Activated CD8-positive, alpha-beta T cell treated with anti-CD3 and anti-CD28 coated beads for 36 hours (primary cell): ENCODE measurements at regions of chr19 and their contacts with region 1.

Region 1: DNA sequence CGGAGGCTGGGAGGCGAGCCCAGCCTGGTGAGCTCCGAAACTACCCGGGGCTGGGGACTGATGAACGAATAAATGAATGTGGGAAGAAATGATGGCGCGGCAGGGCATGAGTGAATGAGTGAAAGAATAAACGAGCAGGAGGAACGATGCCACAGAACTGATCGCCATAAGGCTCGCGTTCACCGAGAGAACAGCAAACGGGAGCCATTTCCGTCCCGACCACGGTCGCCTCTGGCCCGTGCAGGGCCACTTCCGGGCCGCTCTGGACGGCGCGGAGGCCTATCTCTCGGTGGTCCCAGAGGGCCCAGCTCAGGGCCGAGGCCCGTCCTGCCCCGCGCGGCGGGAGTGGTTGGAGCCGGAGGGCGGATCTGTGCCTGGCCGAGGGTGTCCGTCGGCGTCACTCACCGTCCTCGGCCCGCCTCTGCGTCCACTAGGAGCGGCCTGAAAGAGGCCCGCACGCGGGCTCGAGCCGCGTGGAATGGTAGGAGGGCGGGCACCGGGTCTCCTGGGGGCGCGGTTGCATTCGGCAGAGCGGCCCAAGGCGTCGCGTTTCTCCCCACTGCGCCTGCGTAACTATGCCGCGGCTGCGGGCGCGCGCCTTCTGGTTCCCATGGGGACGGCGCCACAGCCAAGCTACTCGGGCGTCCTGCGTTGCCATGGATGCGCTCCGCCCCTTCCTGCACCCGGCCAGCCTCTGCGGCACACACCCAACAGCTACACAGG is at the start of gene ZNF497:
- DNase-seq: peak; percentile 99
- ATAC-seq: peak; percentile 88
- H3K4me3 Mint-ChIP-seq: peak within 1 kb of the TSS; percentile 96
- H3K27ac Mint-ChIP-seq: peak within 1 kb of the TSS; percentile 97
- H3K4me1 Mint-ChIP-seq: peaks cover 18% of the 10 kb centered on the region
- H3K27me3 Mint-ChIP-seq: no peaks in the 10 kb centered on the region
- CTCF ChIP-seq: no peak
- total RNA-seq, gene ZNF497: 1.3 to 1.6 TPM

Region 2: GRCh38 chr19:58346961-58347931 is 15.2 kb before region 1 on chr19:
- CTCF ChIA-PET with region 1: interaction called, 4 read pairs
- POLR2A ChIA-PET with region 1: interaction called, 30 read pairs
- intact Hi-C with region 1: no loop called
- DNase-seq: peak; percentile 79
- ATAC-seq: peak; percentile 96
- H3K4me3 Mint-ChIP-seq: peak overlapping the region; percentile 96
- H3K27ac Mint-ChIP-seq: peak overlapping the region; percentile 84
- H3K4me1 Mint-ChIP-seq: peaks cover 23% of the 10 kb centered on the region
- H3K27me3 Mint-ChIP-seq: no peaks in the 10 kb centered on the region
- CTCF ChIP-seq: no peak

Region 3: DNA sequence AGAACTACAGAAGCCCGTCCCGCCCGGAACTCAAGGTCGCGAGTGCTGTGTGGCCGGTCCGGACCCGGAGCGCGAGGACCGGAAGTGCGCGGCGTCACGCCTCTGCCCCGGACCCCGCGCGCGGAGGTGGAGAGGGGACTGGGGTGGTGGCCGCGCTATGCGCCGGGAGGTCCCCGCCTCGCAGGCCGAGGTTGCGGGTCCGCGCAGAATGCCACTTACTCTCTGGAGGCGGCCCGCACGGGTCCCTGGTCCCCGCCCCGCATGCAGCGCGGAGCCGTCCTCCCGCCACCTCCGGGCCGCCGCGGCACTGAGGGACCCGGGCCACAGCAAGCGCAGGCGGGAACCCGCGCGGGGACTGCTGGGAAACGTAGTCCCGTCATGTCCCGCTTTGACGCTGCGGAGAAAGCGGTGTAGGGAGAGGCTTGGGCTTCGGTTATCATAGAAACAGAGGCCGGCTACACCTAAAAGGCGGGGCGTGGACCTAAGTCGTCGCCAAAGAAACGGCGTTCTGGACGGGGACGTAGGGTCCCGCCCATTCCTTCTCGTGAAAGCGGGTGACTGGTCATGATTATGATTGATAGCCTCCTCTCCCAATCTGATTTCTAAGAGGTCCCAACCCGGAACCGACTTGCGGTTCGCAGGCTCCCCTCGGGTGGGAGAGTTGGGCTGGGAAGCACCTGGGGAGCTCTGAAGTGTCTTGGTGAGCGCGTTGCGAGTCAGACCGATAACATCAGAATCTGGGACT is 18.5 kb after region 1 on chr19 and contains the start of gene ZNF837:
- CTCF ChIA-PET with region 1: no interaction called
- POLR2A ChIA-PET with region 1: interaction called, 16 read pairs
- intact Hi-C with region 1: no loop called
- DNase-seq: peak; percentile 99
- ATAC-seq: peak; percentile 88
- H3K4me3 Mint-ChIP-seq: peak within 1 kb of the TSS; percentile 83
- H3K27ac Mint-ChIP-seq: peak within 1 kb of the TSS; percentile 87
- H3K4me1 Mint-ChIP-seq: peaks cover 20% of the 10 kb centered on the region
- H3K27me3 Mint-ChIP-seq: no peaks in the 10 kb centered on the region
- CTCF ChIP-seq: no peak
- total RNA-seq, gene ZNF837: 1.5 to 1.6 TPM